ENCODE measurements at regions of chr20 and their contacts with region 1.

Region 1: GRCh38 chr20:2742934-2743559 is 50.5 kb downstream of the EBF4 start:
- DNase-seq: no peak
- ATAC-seq: peak; percentile 29

Region 2: GRCh38 chr20:2626853-2627541 is 116.0 kb before region 1 on chr20:
- intact Hi-C with region 1: no loop called
- DNase-seq: no peak
- ATAC-seq: no peak

Region 3: DNA sequence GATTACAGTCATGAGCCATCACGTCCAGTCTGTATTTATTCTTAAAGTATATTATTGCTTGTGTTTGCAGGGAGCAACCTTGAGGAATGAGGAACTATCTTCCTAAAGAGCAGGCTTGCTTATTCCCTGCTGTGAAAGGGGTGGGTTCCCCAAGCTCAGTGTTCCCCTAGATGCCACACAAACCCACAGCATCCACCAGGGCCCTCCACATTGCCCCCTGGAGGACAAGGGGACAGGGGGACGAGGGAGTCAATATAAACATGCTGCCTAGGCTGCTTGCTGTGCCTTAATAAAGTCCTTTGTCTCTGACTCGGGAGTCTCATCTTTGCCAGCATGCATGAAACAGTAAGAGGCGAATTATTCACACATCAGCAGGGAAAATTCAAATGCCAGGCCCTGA is 71.1 kb before region 1 on chr20:
- intact Hi-C with region 1: no loop called
- DNase-seq: no peak
- ATAC-seq: no peak

Region 4: DNA sequence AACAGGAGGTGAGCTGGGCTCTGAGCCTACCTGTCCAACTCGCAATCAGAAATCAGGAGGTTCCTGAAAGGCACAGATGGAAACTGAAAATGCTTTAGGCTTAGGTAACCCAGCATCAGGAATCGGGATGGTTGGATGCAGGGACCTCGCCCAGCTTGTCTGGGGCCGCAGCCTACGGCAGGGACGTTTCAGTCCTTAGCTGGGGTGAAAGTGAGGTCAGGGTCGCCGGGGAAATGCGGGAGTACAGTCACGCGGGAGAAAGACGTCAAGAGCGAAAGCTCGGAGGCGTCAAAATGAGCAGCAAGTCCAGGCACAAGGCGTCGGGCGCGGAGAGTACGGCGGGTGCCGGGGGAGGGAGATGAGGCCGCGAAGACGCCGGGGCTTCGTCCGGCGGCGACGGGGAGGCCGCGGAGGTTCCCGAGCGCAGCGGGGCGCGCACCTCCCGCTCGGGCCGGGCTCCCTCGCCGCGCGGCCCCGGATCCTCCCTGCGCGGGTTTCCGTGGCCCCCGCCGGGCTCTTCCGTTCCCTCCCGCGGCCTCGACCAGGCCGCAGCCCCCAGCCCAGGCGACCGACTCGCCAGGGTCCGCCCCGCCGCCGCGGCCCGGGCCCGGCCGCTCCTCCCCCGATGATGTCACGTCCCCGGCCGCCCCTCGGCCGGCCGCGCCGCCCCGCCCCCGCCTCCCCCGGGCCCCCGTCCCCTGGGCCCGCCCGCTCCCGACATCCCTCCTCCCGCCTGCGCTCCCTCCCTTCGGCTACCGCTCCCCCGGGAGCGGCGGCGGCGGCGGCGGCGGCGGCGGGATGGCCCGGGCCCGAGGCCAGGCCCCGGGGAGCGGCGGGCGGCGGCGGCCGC is 50.8 kb before region 1 on chr20 and contains the start of gene EBF4:
- intact Hi-C with region 1: loop called (anchors 5 kb)
- DNase-seq: no peak
- ATAC-seq: peak; percentile 53
- total RNA-seq, gene EBF4: 4.7 TPM

Region 5: DNA sequence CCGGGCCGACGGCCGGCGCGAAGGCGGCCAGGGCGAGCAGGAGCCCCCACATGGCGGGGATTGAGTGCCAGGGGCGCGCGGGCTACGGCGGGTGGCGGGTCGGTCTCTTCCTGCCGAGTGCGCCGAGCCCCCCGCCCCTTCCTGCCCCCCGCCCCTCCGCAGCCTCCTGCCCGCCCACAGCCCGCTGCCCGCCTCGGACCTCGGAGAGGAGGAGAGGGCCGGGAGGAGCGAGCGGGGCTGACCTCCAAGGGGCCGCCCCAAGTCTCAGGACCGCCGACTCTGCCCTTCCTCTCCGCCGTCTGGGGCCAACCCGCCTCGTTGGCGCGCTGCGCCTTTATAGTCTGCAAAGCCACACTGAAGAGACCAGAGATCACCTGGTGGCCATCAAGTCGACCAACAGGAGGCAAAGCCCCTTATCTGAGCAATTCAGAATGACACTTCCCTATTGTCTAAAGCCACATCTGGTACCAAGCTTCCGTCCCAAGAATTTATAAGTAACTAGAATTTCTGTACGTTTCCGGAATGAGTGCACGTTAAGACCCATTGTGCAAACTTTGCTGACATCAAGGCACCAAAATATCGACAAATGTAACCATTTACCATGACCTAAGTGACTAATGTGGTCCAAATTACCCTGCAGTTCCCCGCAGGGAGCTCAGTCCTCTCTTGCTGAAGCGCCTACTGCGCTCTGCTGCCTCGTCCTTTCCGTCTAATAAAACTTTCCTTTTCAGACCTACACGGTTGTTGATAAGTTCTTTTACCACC is 57.7 kb after region 1 on chr20 and contains the start of gene CPXM1:
- intact Hi-C with region 1: no loop called
- DNase-seq: no peak
- ATAC-seq: peak; percentile 23
- total RNA-seq, gene CPXM1: 2.3 TPM